Left cardiac atrium (tissue), 4 donors: ENCODE measurements at regions of chr17 and their contacts with region 1.

Region 1: GRCh38 chr17:18038861-18039534 is at the starts of genes ATPAF2 and GID4:
- DNase-seq: peak; percentile 100
- ATAC-seq: peak; percentile 97 to 98
- total RNA-seq, gene ATPAF2: 21.7 to 30.5 TPM
- total RNA-seq, gene GID4: 14.6 to 15.1 TPM

Region 2: DNA sequence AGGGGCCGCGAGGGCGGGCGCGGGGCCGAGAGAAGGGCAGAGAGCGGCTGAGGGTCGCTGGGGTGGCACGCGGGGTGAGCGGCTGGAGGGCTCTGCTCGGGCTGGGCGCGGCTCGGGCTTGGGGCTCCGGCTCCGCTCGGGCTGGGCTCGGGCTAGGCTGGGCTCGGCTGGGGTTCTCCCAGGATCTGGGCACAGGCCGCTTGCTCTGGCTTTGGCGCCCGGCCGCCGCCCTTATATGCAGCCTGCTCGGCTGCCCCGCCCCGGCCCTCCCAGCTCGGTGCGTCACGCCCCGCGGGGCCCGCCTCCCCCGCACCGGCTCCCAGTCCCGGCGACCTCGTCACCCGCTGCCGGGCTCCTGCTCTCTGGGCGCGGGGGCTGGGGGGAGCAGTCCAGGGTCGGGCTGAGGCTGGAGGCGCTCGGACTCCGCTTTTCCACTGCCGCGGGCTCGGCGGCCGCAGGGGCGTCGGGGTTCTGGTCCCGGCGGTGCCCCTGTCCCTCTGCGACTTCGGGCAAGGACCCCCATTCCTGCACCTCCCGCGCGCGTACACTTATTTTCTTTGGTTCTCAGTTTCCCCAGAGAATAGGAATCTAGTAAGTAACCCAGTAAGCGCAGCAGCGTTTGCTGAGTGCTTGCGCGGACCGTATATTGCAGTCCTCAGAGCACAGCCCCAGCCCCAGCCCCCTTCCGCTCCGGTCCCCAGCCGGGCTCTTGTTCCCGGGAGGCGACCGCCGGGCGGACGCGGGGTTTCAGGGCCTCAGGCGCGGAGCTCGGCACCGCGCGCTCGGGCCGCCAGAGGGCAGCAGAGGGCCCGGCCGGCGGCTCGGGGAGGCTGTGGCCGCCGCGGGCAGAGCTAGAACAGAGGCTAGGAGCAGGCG is 542.6 kb before region 1 on chr17 and contains the start of gene RASD1:
- intact Hi-C with region 1: no loop called
- DNase-seq: peak; percentile 93
- ATAC-seq: peak; percentile 92 to 95
- total RNA-seq, gene RASD1: 35.3 to 55.1 TPM

Region 3: DNA sequence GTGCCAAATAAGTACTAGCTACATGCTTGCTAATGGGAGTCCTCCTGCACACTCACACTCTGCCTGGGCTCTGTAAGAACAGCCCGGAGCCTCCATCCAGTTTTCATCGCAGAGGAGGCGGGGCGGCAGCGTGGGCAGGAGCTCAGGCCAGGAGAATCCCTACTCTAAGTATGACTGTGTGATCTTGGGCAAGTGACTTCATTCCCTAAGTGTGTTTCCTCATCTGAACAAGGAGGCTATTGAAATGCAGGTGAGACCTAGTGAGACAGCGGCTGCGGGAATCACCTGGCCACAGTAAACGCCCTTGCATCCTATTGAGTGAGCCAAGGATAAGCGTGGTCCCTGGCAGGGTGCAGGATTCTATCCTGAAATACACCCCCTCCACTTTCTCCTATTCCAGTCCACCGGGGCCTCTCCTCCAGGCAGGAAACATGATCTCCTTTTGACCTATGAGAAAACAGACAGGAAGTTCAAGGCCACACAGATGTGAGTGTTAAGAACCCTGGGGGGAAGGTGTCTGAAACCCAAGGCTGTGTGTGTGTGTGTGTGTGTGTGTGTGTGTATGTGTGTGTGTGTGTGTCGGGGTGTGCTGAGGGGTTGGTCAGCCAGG is 363.0 kb before region 1 on chr17:
- intact Hi-C with region 1: loop called (anchors 5 kb)
- DNase-seq: no peak
- ATAC-seq: no peak

Region 4: GRCh38 chr17:17812211-17813057 is 226.6 kb before region 1 on chr17:
- intact Hi-C with region 1: loop called in 1 of 2 experiments (anchors 10 kb)
- DNase-seq: peak; percentile 78
- ATAC-seq: peak; percentile 17 to 18

Region 5: GRCh38 chr17:17890773-17891759 is 147.9 kb before region 1 on chr17:
- intact Hi-C with region 1: loop called (anchors 10 kb)
- DNase-seq: no peak
- ATAC-seq: peak; percentile 72 to 77

Region 6: DNA sequence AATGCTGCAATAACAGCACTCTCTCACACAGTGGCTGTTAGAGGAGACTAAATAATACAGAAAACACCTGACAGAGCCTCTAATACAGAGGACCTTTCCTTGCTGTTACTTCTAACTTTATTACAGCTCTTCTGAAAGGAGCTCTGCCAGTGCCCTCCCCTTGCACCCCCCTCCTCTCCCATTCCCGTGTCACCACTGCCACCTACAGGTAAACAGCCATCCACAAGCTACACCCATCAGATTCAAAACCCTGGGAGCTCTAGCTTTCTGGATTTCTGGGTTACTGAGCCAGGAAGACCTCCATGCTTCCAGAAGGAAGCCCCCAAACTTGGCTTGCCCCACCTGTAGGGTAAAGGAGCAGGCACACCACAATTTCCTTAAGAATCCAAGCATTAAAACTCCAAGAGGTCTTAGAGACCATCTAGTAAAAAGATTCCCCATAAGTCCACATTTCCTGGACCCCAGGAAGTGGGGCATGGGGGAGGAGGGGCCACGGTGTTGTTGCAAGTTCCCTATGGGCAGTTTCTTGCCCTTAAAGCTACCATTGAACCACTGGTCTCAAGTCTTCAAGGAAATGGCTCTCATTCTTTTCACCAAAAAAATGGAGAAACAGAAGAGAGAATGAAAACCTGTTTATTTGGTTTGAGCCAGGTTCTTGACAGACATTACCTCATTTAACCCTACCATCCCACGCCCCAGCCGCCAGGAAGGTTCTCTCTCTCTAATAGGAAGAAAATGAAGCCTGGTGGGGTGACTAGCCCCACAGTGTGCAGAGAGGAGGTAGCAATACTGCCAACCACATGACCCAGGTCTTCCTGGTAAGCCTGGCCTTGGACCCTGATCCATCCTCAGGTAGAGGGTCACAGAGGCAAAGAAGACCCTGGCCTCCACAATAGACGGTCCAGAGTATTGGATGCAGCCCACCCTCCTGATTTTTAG is 119.6 kb before region 1 on chr17:
- intact Hi-C with region 1: loop called in 1 of 2 experiments (anchors 10 kb)
- DNase-seq: peak; percentile 77
- ATAC-seq: peak; percentile 75 to 77

Region 7: GRCh38 chr17:18166894-18167293 is 127.9 kb after region 1 on chr17:
- intact Hi-C with region 1: no loop called
- DNase-seq: no peak
- ATAC-seq: peak in 1 of 2 donors; percentile 25